ENCODE measurements at regions of chr10 and their contacts with region 1.

Region 1: GRCh38 chr10:132654702-132655661 is 117.4 kb downstream of the INPP5A start:
- DNase-seq: peak; percentile 55
- ATAC-seq: peak; percentile 97
- H3K4me3 ChIP-seq: no peak overlapping the region
- H3K27ac ChIP-seq: no peak overlapping the region
- H3K4me1 ChIP-seq: no peaks in the 10 kb centered on the region
- H3K27me3 ChIP-seq: no peaks in the 10 kb centered on the region
- CTCF ChIP-seq: peak; percentile 95
- POLR2A ChIP-seq: no peak
- RAD21 ChIP-seq: peak; percentile 99

Region 2: DNA sequence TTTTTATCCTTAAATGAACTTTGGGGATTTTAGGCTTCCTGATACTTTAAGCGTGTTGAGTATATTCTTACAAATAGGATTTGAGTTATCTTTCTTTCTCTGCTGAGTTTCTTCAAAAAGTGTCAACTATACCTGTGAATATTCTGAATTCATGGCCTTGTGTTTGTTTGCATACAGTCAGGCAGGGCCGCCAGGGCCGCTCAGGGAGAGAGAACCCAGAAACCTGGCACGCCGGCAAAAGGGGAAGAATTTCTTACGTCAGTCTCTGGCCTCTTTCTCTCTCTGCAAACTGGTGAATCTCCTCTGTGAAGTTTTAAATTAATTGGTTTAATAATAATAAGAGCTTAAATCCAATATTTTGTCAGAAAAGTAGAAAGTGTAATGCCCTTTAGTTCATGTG is 644.0 kb before region 1 on chr10:
- CTCF ChIA-PET with region 1: no interaction called
- POLR2A ChIA-PET with region 1: no interaction called
- dilution Hi-C with region 1: no loop called
- in situ Hi-C with region 1: no loop called
- intact Hi-C with region 1: no loop called
- DNase-seq: no peak
- ATAC-seq: no peak
- H3K4me3 ChIP-seq: no peak overlapping the region
- H3K27ac ChIP-seq: no peak overlapping the region
- H3K4me1 ChIP-seq: no peaks in the 10 kb centered on the region
- H3K27me3 ChIP-seq: peaks cover 36% of the 10 kb centered on the region
- CTCF ChIP-seq: no peak
- POLR2A ChIP-seq: no peak
- RAD21 ChIP-seq: no peak

Region 3: GRCh38 chr10:132482090-132482800 is 172.7 kb before region 1 on chr10:
- CTCF ChIA-PET with region 1: no interaction called
- POLR2A ChIA-PET with region 1: no interaction called
- dilution Hi-C with region 1: no loop called
- in situ Hi-C with region 1: no loop called
- intact Hi-C with region 1: no loop called
- DNase-seq: peak; percentile 91
- ATAC-seq: peak; percentile 85
- H3K4me3 ChIP-seq: no peak overlapping the region
- H3K27ac ChIP-seq: peak overlapping the region; percentile 13; the same call in 1 of the 2 replicates
- H3K4me1 ChIP-seq: peaks cover 7% of the 10 kb centered on the region
- H3K27me3 ChIP-seq: no peaks in the 10 kb centered on the region; the same call in 1 of the 2 replicates
- CTCF ChIP-seq: no peak
- POLR2A ChIP-seq: no peak
- RAD21 ChIP-seq: no peak

Region 4: GRCh38 chr10:132774902-132775747 is 120.1 kb after region 1 on chr10:
- CTCF ChIA-PET with region 1: no interaction called
- POLR2A ChIA-PET with region 1: no interaction called
- dilution Hi-C with region 1: no loop called
- in situ Hi-C with region 1: loop called (anchors 10 kb)
- intact Hi-C with region 1: no loop called
- DNase-seq: no peak
- ATAC-seq: no peak
- H3K4me3 ChIP-seq: no peak overlapping the region
- H3K27ac ChIP-seq: no peak overlapping the region
- H3K4me1 ChIP-seq: no peaks in the 10 kb centered on the region
- H3K27me3 ChIP-seq: no peaks in the 10 kb centered on the region
- CTCF ChIP-seq: no peak
- POLR2A ChIP-seq: no peak
- RAD21 ChIP-seq: no peak

Region 5: DNA sequence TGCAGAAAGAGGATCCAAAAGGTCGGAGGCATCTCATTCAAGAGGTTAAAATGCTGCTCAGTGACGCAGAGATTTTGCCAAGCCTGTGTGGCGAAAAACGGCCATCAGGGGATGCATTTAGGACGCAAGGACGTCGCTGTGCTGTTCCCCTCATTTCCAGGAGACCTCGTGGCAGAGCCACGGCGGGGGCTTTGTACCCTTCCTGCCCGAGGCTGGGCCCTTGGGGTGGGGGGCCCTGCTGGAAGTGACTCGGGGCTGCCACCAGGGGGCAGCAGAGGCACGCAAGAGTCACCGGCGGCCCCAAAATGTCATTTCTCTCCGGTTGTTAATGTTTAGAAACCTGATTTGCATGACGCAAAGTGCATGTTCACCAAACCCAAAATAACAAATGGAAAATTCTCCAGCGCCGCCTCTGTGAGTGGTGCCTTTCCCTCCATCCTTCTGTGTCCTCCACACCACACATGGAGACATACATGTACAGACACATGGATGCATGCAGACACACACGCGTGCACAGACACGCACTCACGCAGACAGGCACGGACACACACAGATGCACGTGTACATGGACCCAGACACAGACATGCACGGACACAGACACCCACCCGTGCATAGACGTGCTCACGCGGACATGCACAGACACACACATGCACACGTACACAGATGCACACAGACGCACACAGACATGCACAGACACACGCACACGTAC is 182.0 kb after region 1 on chr10:
- CTCF ChIA-PET with region 1: no interaction called
- POLR2A ChIA-PET with region 1: no interaction called
- dilution Hi-C with region 1: no loop called
- in situ Hi-C with region 1: no loop called
- intact Hi-C with region 1: loop called (anchors 2 kb)
- DNase-seq: peak; percentile 4
- ATAC-seq: peak; percentile 75
- H3K4me3 ChIP-seq: no peak overlapping the region
- H3K27ac ChIP-seq: no peak overlapping the region
- H3K4me1 ChIP-seq: no peaks in the 10 kb centered on the region
- H3K27me3 ChIP-seq: peaks cover 15% of the 10 kb centered on the region
- CTCF ChIP-seq: peak; percentile 59
- POLR2A ChIP-seq: no peak
- RAD21 ChIP-seq: peak; percentile 57

Region 6: GRCh38 chr10:132939957-132940790 is 285.2 kb after region 1 on chr10:
- CTCF ChIA-PET with region 1: no interaction called
- POLR2A ChIA-PET with region 1: no interaction called
- dilution Hi-C with region 1: no loop called
- in situ Hi-C with region 1: no loop called
- intact Hi-C with region 1: loop called (anchors 5 kb)
- DNase-seq: peak; percentile 47
- ATAC-seq: peak; percentile 72
- H3K4me3 ChIP-seq: no peak overlapping the region
- H3K27ac ChIP-seq: no peak overlapping the region
- H3K4me1 ChIP-seq: peaks cover 3% of the 10 kb centered on the region; the same call in 1 of the 2 replicates
- H3K27me3 ChIP-seq: peaks cover 6% of the 10 kb centered on the region
- CTCF ChIP-seq: peak; percentile 76
- POLR2A ChIP-seq: no peak
- RAD21 ChIP-seq: peak; percentile 81

Region 7: DNA sequence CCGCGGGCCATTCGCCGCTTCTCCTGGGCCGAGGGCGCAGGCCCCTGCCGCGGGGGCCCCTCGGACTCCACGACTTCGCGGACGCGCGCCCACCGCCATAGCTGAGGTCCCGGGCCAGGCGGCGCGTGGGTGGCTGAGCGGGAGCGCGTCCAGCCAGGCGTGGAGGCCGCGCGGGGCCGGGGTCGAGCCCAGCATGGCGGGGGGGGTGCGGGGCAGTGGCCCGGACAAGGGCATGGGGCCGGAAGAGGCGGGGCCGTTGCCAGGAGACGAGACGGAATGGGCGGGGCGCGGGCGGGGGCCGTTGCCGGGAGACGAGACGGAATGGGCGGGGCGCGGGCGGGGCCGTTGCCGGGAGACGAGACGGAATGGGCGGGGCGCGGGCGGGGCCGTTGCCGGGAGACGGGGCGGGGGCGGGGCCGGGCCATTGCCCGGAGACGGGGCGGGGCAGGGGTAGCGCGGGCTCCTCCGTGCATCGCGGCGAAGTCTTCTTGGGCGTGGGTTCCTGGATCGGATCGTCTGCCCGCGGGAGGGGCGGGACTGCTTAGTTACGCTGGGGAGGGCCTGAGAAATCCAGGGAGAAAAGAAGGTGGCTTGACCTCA is 606.8 kb after region 1 on chr10:
- CTCF ChIA-PET with region 1: no interaction called
- POLR2A ChIA-PET with region 1: no interaction called
- dilution Hi-C with region 1: no loop called
- in situ Hi-C with region 1: loop called (anchors 25 kb)
- intact Hi-C with region 1: no loop called
- DNase-seq: peak; percentile 38
- ATAC-seq: peak; percentile 76
- H3K4me3 ChIP-seq: peak overlapping the region; percentile 66
- H3K27ac ChIP-seq: peak overlapping the region; percentile 91
- H3K4me1 ChIP-seq: peaks cover 21% of the 10 kb centered on the region
- H3K27me3 ChIP-seq: no peaks in the 10 kb centered on the region; the same call in 1 of the 2 replicates
- CTCF ChIP-seq: no peak
- POLR2A ChIP-seq: peak; percentile 56; the same call in 1 of the 2 replicates
- RAD21 ChIP-seq: no peak

Measured in IMR-90 (cell line).